GM12878 (cell line): ENCODE measurements at regions of chr6 and their contacts with region 1.

Region 1: DNA sequence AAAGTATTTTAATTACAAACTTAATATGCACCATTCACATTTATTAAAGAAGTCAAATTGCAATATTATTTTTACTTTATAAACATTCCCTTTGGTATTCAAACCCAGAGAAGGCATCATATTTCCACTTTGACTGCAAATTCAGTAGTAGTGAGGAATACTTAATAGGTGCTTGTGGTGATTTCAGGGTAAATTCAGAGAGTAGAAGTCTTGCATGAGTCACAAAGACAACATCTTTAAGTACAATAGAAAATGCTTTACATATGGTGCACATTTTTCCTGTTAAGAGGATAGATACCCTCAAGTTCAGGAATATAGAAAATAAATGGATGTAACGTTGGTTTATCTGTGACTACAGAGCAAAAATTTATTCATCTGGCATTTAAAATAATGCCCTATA is 390.2 kb downstream of the TENT5A start:
- DNase-seq: no peak
- ATAC-seq: no peak
- H3K4me3 ChIP-seq: no peak overlapping the region
- H3K27ac ChIP-seq: no peak overlapping the region
- H3K4me1 ChIP-seq: no peaks in the 10 kb centered on the region
- H3K27me3 ChIP-seq: no peaks in the 10 kb centered on the region
- CTCF ChIP-seq: no peak
- EP300 ChIP-seq: no peak
- POLR2A ChIP-seq: no peak
- RAD21 ChIP-seq: no peak

Region 2: GRCh38 chr6:81289229-81289628 is 73.0 kb before region 1 on chr6:
- CTCF ChIA-PET with region 1: no interaction called
- POLR2A ChIA-PET with region 1: no interaction called
- RAD21 ChIA-PET with region 1: no interaction called
- SMC1A ChIA-PET with region 1: no interaction called
- in situ Hi-C with region 1: no loop called
- intact Hi-C with region 1: loop called (anchors 2 kb)
- DNase-seq: no peak
- ATAC-seq: no peak
- H3K4me3 ChIP-seq: no peak overlapping the region
- H3K27ac ChIP-seq: no peak overlapping the region
- H3K4me1 ChIP-seq: no peaks in the 10 kb centered on the region
- H3K27me3 ChIP-seq: no peaks in the 10 kb centered on the region
- CTCF ChIP-seq: no peak
- EP300 ChIP-seq: no peak
- POLR2A ChIP-seq: no peak
- RAD21 ChIP-seq: no peak

Region 3: DNA sequence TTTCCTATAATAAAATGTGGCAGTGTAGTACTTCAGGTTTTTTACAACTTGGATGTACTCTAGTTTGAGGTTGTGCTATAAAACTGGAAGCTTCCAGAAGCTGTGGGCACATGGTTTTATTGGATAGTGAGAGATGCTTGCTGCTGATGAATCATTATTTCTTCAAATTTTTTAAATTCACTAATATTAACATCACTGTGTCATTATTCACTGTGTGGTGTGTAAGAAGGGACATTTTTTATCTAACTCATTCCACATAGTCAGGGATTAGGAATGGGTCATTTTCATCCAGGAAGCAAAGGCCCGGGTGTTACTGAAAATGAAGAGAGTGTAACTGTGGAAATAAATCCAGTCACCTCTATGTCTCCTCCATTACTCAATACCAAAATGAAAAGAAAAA is 30.7 kb before region 1 on chr6:
- CTCF ChIA-PET with region 1: no interaction called
- POLR2A ChIA-PET with region 1: no interaction called
- RAD21 ChIA-PET with region 1: no interaction called
- SMC1A ChIA-PET with region 1: no interaction called
- in situ Hi-C with region 1: no loop called
- intact Hi-C with region 1: no loop called
- DNase-seq: no peak
- ATAC-seq: no peak
- H3K4me3 ChIP-seq: no peak overlapping the region
- H3K27ac ChIP-seq: no peak overlapping the region
- H3K4me1 ChIP-seq: no peaks in the 10 kb centered on the region
- H3K27me3 ChIP-seq: no peaks in the 10 kb centered on the region
- CTCF ChIP-seq: no peak
- EP300 ChIP-seq: no peak
- POLR2A ChIP-seq: no peak
- RAD21 ChIP-seq: no peak

Region 4: GRCh38 chr6:81401970-81402690 is 39.9 kb after region 1 on chr6:
- CTCF ChIA-PET with region 1: no interaction called
- POLR2A ChIA-PET with region 1: no interaction called
- RAD21 ChIA-PET with region 1: no interaction called
- SMC1A ChIA-PET with region 1: no interaction called
- in situ Hi-C with region 1: no loop called
- intact Hi-C with region 1: no loop called
- DNase-seq: no peak
- ATAC-seq: no peak
- H3K4me3 ChIP-seq: no peak overlapping the region
- H3K27ac ChIP-seq: no peak overlapping the region
- H3K4me1 ChIP-seq: no peaks in the 10 kb centered on the region
- H3K27me3 ChIP-seq: no peaks in the 10 kb centered on the region
- CTCF ChIP-seq: no peak
- EP300 ChIP-seq: no peak
- POLR2A ChIP-seq: no peak
- RAD21 ChIP-seq: no peak

Region 5: GRCh38 chr6:81606965-81607381 is 244.7 kb after region 1 on chr6:
- CTCF ChIA-PET with region 1: no interaction called
- POLR2A ChIA-PET with region 1: no interaction called
- RAD21 ChIA-PET with region 1: no interaction called
- SMC1A ChIA-PET with region 1: no interaction called
- in situ Hi-C with region 1: no loop called
- intact Hi-C with region 1: no loop called
- DNase-seq: no peak
- ATAC-seq: no peak
- H3K4me3 ChIP-seq: no peak overlapping the region
- H3K27ac ChIP-seq: no peak overlapping the region
- H3K4me1 ChIP-seq: no peaks in the 10 kb centered on the region
- H3K27me3 ChIP-seq: no peaks in the 10 kb centered on the region
- CTCF ChIP-seq: no peak
- EP300 ChIP-seq: no peak
- POLR2A ChIP-seq: no peak
- RAD21 ChIP-seq: no peak